Activated B cell treated with CpG ODN at 0.5 μM for 24 hours (primary cell): ENCODE measurements at regions of chr5 and their contacts with region 1.

Region 1: GRCh38 chr5:88729084-88729828 is 153.7 kb downstream of the MEF2C start:
- DNase-seq: no peak
- ATAC-seq: peak; percentile 21
- H3K4me3 Mint-ChIP-seq: no peak overlapping the region
- H3K27ac Mint-ChIP-seq: peak overlapping the region; percentile 78
- H3K4me1 Mint-ChIP-seq: peaks cover 51% of the 10 kb centered on the region
- H3K27me3 Mint-ChIP-seq: no peaks in the 10 kb centered on the region
- CTCF ChIP-seq: peak; percentile 58

Region 2: DNA sequence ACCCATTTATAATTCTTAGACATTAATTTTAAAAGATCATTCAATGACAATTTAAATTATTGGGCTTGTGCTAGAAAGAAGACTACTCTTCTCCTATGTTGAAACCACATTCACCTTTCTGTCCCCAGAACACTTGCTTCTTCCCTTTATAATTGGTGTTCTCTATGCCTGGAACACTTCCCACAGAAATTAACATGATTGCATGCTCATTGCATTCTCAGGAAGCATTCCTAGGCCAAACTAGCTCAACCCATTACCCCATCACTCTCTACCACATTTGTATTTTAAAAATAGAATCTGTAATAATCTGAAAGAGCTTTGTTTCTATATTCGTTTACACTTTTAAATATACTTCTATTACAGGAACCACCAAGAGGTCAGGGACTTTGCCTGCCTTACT is 31.0 kb before region 1 on chr5:
- CTCF ChIA-PET with region 1: no interaction called
- POLR2A ChIA-PET with region 1: no interaction called
- intact Hi-C with region 1: no loop called
- DNase-seq: no peak
- ATAC-seq: no peak
- H3K4me3 Mint-ChIP-seq: no peak overlapping the region
- H3K27ac Mint-ChIP-seq: no peak overlapping the region
- H3K4me1 Mint-ChIP-seq: peaks cover 2% of the 10 kb centered on the region
- H3K27me3 Mint-ChIP-seq: peaks cover 54% of the 10 kb centered on the region
- CTCF ChIP-seq: no peak

Region 3: DNA sequence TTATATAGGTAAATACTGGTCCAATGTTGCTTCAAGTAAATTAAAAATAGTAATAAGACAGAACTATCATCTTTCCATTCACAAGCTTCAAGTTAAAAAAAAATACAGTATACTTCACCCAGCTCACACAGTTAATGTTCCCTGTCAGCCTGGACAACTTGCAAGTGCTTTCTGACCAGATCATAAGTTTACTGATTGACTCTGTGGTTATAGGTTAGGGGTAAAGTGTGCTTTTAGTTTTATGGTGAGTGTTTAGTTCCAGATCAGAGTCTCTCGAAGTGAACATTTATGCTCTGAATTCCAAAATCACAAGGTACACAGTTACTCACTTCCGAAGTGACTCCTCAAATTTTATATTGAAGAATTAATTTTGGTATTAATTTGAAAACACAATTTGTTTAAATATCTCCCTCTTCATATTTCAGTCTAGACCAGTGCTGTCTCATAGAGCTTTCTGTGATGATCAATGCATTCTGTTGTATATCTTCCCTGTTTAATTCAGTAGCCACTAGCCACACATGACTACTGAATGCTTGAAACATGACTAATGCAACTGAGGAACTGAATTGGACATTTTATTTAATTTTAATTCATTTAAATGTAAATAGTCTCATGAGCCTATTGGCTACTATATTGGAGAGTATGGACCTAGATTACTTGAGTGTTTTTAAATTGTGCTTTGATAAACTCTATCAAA is 63.0 kb after region 1 on chr5:
- CTCF ChIA-PET with region 1: interaction called, 11 read pairs
- POLR2A ChIA-PET with region 1: interaction called, 10 read pairs
- intact Hi-C with region 1: no loop called
- DNase-seq: no peak
- ATAC-seq: peak; percentile 21
- H3K4me3 Mint-ChIP-seq: no peak overlapping the region
- H3K27ac Mint-ChIP-seq: peak overlapping the region; percentile 57
- H3K4me1 Mint-ChIP-seq: peaks cover 51% of the 10 kb centered on the region
- H3K27me3 Mint-ChIP-seq: no peaks in the 10 kb centered on the region
- CTCF ChIP-seq: no peak

Region 4: GRCh38 chr5:88883059-88883835 is 154.0 kb after region 1 on chr5 and contains the start of gene MEF2C:
- CTCF ChIA-PET with region 1: interaction called, 12 read pairs
- POLR2A ChIA-PET with region 1: interaction called, 242 read pairs
- intact Hi-C with region 1: loop called (anchors 1 kb)
- DNase-seq: peak; percentile 62
- ATAC-seq: peak; percentile 57
- H3K4me3 Mint-ChIP-seq: peak within 1 kb of the TSS; percentile 99
- H3K27ac Mint-ChIP-seq: peak within 1 kb of the TSS; percentile 98
- H3K4me1 Mint-ChIP-seq: peaks cover 46% of the 10 kb centered on the region
- H3K27me3 Mint-ChIP-seq: no peaks in the 10 kb centered on the region
- CTCF ChIP-seq: no peak
- total RNA-seq, gene MEF2C: 348 and 359 TPM in 2 replicates

Region 5: DNA sequence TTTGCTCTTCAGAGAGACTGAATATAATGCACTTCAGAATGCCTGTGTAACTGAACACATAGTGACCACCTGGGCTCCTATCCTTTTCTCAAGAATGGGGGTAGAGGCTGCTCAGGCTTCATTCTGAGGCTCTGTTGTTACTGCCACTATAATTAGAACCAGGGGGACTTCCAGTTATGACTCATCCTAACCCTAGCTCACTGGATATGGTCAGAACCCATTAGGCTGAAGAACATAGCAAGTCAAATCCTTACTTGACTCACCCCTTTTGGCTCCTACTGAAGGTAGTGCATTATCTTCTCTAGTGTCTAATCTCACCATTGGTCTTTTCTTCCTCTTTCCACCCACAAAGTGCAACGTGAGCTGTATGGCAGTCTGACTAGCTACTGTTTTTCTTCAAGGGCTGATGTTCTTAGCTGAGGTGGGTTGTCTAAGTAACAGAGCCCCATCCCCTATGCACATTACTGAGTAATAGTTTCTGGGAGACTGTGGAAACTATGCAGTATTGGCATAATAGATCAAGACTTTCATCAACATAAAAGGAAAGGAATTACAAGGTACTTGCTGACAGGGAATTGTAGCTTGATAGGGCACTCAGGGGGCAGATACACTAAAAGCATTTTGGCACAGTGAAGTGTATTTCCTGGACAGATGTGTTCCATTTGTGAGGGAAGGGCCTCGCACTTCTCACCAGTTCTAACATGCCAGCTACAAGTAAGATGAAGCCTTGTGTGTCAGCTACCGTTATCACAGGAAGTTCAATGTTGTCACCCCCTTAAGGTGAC is 584.7 kb after region 1 on chr5:
- CTCF ChIA-PET with region 1: interaction called, 7 read pairs
- POLR2A ChIA-PET with region 1: interaction called, 6 read pairs
- intact Hi-C with region 1: loop called (anchors 1 kb)
- DNase-seq: no peak
- ATAC-seq: peak; percentile 94
- H3K4me3 Mint-ChIP-seq: peak overlapping the region; percentile 66
- H3K27ac Mint-ChIP-seq: peak overlapping the region; percentile 96
- H3K4me1 Mint-ChIP-seq: peaks cover 48% of the 10 kb centered on the region
- H3K27me3 Mint-ChIP-seq: no peaks in the 10 kb centered on the region
- CTCF ChIP-seq: no peak

Region 6: DNA sequence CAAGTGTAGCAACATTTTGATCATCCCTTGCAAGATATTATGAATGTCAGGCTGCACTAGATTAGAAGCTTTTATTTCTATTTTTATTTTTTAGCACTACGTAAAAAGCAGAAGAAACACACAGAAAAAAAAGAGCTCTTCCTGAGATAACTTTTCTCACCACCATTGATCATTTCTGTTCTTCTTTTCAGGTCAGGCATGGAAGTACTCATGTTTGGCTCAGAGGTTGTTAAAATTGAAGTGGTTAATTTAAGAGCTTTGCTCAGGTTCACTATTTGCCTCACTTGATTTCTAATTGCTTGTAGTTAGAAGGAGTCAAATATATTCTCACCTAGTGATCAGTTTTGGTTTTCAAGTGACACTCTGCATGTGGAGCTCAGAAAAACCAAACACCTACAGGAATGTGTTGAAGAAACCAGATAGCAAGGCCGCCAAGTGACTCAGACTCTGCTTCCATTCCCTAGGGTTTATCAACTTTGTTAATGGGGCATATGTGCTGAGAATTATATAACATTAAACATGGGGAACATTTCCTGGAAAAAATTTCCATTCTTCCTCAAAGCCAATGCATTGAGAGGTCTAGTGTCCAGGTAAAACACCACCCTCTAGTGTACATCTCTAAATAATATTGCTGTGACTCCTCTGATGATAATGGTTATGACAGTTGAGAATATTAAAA is 1000.5 kb after region 1 on chr5:
- CTCF ChIA-PET with region 1: interaction called, 14 read pairs
- POLR2A ChIA-PET with region 1: interaction called, 3 read pairs
- intact Hi-C with region 1: loop called (anchors 1 kb)
- DNase-seq: no peak
- ATAC-seq: no peak
- H3K4me3 Mint-ChIP-seq: no peak overlapping the region
- H3K27ac Mint-ChIP-seq: peak overlapping the region; percentile 70
- H3K4me1 Mint-ChIP-seq: peaks cover 33% of the 10 kb centered on the region
- H3K27me3 Mint-ChIP-seq: no peaks in the 10 kb centered on the region
- CTCF ChIP-seq: no peak

Region 7: GRCh38 chr5:89954916-89955315 is 1225.7 kb after region 1 on chr5:
- CTCF ChIA-PET with region 1: no interaction called
- POLR2A ChIA-PET with region 1: no interaction called
- intact Hi-C with region 1: no loop called
- DNase-seq: no peak
- ATAC-seq: no peak
- H3K4me3 Mint-ChIP-seq: no peak overlapping the region
- H3K27ac Mint-ChIP-seq: no peak overlapping the region
- H3K4me1 Mint-ChIP-seq: no peaks in the 10 kb centered on the region
- H3K27me3 Mint-ChIP-seq: no peaks in the 10 kb centered on the region
- CTCF ChIP-seq: no peak

Region 8: DNA sequence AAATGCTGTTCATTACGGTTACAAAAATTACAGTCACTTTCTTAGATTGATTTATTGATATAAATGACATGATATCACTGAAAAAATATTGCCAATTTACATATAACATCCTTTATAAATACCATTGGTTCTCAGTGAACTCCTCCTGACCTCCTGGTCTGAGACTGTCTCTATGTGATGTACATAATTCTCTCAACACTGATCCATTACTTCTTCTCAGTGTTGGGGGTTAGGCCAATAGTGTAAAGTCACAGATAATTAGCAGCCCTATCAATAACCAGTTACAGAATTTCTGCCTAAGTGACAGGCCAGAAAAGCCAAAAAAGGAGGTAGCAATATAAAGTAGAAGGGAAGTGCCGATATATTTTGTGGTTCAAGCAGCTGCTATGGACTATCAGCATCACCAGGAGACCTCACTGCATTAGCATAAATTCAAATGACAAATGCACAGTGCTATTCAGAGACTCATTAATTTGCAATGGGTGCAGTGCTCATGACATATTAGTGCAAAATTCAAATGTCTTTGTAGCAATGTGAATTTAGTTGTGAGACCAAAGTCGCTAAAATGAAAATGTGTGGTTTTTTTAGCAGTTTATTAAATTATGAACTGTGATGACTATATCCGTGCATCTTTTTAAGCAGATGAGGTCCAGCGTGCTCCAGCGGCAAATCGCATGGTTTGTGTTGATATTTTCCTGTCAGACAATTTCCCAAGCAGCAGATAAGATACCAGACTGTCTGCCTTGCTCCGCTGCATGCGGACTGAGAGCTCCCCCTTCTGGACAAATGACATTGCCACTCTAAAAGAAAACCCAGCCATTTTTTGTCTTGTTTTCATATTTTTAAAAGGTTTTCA is 1535.7 kb after region 1 on chr5:
- CTCF ChIA-PET with region 1: interaction called, 73 read pairs
- POLR2A ChIA-PET with region 1: interaction called, 6 read pairs
- intact Hi-C with region 1: loop called (anchors 1 kb)
- DNase-seq: peak; percentile 28
- ATAC-seq: peak; percentile 68
- H3K4me3 Mint-ChIP-seq: peak overlapping the region; percentile 48
- H3K27ac Mint-ChIP-seq: no peak overlapping the region
- H3K4me1 Mint-ChIP-seq: peaks cover 6% of the 10 kb centered on the region
- H3K27me3 Mint-ChIP-seq: peaks cover 3% of the 10 kb centered on the region
- CTCF ChIP-seq: peak; percentile 92